Activated B cell treated with CpG ODN at 0.5 μM for 24 hours (primary cell): ENCODE measurements at regions of chr4 and their contacts with region 1.

Region 1: GRCh38 chr4:101014417-101014816 is 332.9 kb downstream of the PPP3CA start:
- DNase-seq: no peak
- ATAC-seq: no peak
- H3K4me3 Mint-ChIP-seq: no peak overlapping the region
- H3K27ac Mint-ChIP-seq: no peak overlapping the region
- H3K4me1 Mint-ChIP-seq: peaks cover 33% of the 10 kb centered on the region
- H3K27me3 Mint-ChIP-seq: no peaks in the 10 kb centered on the region
- CTCF ChIP-seq: no peak

Region 2: DNA sequence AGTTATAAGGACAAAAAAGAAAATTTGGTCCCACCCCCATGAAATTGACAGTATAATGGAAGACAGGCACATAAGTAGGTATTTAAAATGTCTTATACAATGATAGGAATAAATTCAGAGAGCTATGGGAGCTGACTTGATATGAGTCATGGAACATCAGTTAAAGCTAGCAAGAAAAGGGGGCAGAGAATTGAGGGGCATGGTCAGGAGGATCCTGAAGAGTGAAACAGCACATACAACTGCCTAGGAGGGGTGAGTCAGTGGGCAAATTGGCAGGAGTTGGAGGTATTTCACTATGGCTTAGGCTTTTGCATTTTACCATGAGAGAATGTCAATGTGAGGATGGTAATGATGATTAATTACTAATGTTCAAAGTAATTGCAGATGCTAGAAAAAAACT is 680.8 kb after region 1 on chr4:
- CTCF ChIA-PET with region 1: no interaction called
- POLR2A ChIA-PET with region 1: no interaction called
- intact Hi-C with region 1: loop called (anchors 5 kb)
- DNase-seq: no peak
- ATAC-seq: no peak
- H3K4me3 Mint-ChIP-seq: no peak overlapping the region
- H3K27ac Mint-ChIP-seq: peak overlapping the region; percentile 51
- H3K4me1 Mint-ChIP-seq: peaks cover 82% of the 10 kb centered on the region
- H3K27me3 Mint-ChIP-seq: no peaks in the 10 kb centered on the region
- CTCF ChIP-seq: no peak